PC-9 (cell line): ENCODE measurements at regions of chr4 and their contacts with region 1.

Region 1: DNA sequence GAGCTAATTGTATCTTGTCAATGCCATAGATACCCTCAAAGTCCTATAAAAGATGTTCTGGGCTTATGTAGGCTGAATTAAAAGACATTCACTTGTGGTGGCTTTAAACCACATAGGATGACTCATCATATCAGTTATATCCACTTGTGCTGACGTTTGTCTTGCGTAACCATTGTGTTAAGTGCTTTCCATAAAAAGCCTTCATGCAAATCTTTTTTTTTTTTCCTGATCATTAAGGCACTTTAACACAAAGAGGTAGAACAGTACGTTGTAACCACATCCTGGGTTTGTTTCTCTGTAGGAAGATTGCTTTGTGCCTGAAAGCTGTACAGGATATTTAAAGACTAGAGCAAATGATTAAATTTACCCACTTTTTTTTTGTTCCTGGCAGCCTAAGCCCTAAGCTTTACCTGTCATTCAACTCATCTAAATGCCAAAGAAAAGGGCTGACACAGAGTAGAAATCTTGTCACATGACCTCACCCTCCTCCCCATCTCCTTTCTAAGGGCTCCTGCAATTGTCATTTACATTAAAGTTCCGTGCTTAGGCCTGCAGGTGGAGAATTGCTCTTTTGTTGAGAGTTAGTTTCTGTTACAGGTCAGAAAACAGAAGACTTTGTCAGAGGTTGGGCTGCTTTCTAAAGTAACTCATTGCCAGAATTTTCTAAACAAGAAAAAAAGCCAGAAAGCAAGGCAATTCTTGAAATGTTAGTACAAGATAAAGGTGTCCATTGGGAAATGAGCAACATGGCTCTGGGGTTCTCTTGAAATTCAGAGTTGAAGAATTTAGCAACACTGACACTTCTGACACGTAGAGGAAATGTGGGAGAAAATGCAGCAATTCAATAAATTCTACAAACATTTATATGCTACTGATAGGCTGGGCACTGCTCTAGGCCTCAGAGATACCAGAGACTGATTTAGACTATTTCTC is 555.6 kb downstream of the PPARGC1A start:
- DNase-seq: peak; percentile 22 to 75
- H3K4me3 ChIP-seq: no peak overlapping the region
- H3K27ac ChIP-seq: peak overlapping the region; percentile 1; the same call in 1 of the 2 replicates
- H3K4me1 ChIP-seq: peaks cover 9% of the 10 kb centered on the region
- H3K27me3 ChIP-seq: no peaks in the 10 kb centered on the region
- CTCF ChIP-seq: no peak

Region 2: DNA sequence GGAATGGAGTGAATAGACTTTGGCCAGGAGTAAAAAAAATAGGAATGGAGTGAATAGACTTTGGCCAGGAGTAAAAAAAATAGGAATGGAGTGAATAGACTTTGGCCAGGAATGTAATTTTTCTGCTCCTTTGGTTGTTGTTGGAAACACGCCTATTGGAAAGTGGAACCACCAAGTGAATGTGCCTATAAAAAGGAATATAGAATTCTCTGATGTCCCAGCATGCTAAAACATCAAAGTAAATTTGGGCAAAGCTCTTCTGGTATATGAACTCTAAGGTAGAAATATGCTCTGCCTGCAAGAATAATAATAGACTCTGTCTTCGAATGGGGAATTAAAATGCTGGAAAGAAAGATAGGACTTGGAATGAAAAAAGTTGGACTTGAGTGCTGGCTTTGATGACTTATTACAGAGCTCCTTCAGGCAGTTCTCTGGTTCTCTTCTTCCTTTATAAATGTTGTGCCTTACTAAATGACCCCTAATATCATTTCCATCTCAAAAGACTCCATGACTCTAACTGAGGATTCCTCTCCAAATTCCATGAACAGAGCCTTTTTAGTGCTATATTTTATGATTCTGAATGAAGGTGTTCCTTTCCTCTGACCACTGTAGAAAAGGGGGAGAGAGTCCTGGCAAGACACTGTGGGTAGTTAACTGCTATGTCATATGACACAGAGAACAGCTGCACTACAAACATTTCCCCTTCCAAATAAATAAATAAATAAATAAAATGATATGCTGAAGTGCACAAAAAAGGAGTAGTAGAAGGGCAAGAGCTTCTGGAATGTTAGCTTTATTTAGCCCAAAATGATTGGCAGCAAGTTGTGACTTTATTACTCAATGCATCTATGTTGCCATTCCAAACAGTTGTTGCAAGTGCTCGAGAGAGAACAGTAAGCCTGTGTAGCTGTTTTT is 655.0 kb before region 1 on chr4:
- CTCF ChIA-PET with region 1: no interaction called
- POLR2A ChIA-PET with region 1: no interaction called
- intact Hi-C with region 1: no loop called
- DNase-seq: no peak
- H3K4me3 ChIP-seq: no peak overlapping the region
- H3K27ac ChIP-seq: no peak overlapping the region
- H3K4me1 ChIP-seq: no peaks in the 10 kb centered on the region
- H3K27me3 ChIP-seq: no peaks in the 10 kb centered on the region
- CTCF ChIP-seq: no peak

Region 3: DNA sequence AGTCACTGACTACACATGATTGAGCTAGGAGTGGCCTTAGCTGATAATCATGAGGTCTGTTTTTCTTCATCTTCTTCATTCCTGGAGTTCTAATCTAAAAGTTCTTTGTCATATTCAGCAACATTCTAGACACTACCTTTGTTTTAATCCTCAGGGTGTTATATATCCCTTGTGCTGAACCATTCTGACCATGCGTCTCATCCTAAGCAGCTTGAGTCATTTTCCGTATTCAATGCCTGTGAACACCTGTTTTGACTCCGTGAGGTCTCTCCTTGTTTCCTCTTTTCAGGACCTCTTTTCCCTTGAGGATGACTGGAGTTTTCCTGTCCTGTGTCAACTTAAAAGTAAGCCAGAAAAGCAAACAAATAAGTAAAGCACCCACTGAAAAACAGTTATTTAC is 43.6 kb before region 1 on chr4:
- CTCF ChIA-PET with region 1: no interaction called
- POLR2A ChIA-PET with region 1: no interaction called
- intact Hi-C with region 1: loop called (anchors 2 kb)
- DNase-seq: peak; percentile 50 to 78
- H3K4me3 ChIP-seq: no peak overlapping the region
- H3K27ac ChIP-seq: peak overlapping the region; percentile 93
- H3K4me1 ChIP-seq: peaks cover 22% of the 10 kb centered on the region
- H3K27me3 ChIP-seq: no peaks in the 10 kb centered on the region
- CTCF ChIP-seq: no peak

Region 4: DNA sequence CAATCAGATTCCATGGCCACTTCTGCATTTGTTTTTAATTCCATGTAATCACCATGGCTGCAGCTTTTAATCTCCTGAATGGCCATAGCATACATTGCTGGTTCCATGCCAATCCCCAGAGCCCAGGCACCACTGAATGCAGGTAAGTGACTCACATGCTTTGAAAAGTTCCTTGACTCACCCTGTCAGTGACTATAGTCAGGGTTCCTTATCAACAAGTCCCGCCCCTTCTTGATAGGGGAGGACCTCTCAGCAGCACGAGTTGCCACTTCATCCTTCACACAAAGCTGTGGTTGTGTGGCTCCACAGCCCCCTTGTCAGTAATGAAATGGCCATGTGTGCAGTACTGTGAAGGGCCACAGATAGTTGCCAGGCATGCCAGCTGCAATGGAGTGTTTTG is 39.0 kb after region 1 on chr4:
- CTCF ChIA-PET with region 1: no interaction called
- POLR2A ChIA-PET with region 1: no interaction called
- intact Hi-C with region 1: loop called (anchors 1 kb)
- DNase-seq: peak; percentile 72 to 83
- H3K4me3 ChIP-seq: no peak overlapping the region
- H3K27ac ChIP-seq: no peak overlapping the region
- H3K4me1 ChIP-seq: no peaks in the 10 kb centered on the region; the same call in 1 of the 2 replicates
- H3K27me3 ChIP-seq: no peaks in the 10 kb centered on the region
- CTCF ChIP-seq: no peak

Region 5: GRCh38 chr4:23970201-23970850 is 636.1 kb after region 1 on chr4:
- CTCF ChIA-PET with region 1: no interaction called
- POLR2A ChIA-PET with region 1: no interaction called
- intact Hi-C with region 1: no loop called
- DNase-seq: no peak
- H3K4me3 ChIP-seq: no peak overlapping the region
- H3K27ac ChIP-seq: no peak overlapping the region
- H3K4me1 ChIP-seq: no peaks in the 10 kb centered on the region
- H3K27me3 ChIP-seq: peaks cover 9% of the 10 kb centered on the region
- CTCF ChIP-seq: no peak